ENCODE measurements at regions of chr2 and their contacts with region 1.

Region 1: DNA sequence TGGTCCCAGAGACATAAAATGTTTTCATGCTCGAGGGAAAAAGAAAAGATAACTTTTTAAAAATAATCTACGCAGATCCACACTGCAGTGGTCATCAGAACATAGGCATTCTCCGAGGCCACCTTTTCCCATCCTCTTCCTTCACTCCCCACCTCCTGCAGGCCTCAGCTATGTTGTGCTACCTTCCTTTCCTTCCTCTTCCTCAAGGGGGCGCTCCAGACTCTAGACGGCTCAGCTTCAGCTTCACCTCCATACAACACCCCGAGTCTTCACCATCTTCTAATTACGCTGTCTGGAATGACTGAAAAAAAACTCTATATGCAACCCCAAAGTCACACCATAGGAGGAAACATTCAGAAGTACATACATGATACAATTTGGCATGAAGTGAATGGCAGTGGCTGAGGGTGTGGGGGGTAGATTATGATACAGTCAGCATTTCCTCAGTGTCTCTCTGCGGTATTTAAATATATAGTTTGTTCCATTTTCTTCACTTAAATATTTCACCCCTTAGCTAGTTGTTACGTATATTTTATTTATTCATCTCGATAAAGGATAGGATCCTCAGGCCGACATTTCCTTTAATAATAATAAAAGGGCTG is 583.6 kb downstream of the IRS1 start:
- DNase-seq: peak; percentile 42 to 58 (median 50)
- H3K4me3 ChIP-seq: no peak overlapping the region
- H3K4me3 Mint-ChIP-seq: no peak overlapping the region
- H3K27ac ChIP-seq: no peak overlapping the region
- H3K27ac Mint-ChIP-seq: no peak overlapping the region
- H3K4me1 ChIP-seq: no peaks in the 10 kb centered on the region
- H3K4me1 Mint-ChIP-seq: peaks cover 0 to 3% (median 2%) of the 10 kb centered on the region in 4 donors
- H3K27me3 ChIP-seq: no peaks in the 10 kb centered on the region
- H3K27me3 Mint-ChIP-seq: peaks cover 4 to 7% of the 10 kb centered on the region in 2 donors

Region 2: DNA sequence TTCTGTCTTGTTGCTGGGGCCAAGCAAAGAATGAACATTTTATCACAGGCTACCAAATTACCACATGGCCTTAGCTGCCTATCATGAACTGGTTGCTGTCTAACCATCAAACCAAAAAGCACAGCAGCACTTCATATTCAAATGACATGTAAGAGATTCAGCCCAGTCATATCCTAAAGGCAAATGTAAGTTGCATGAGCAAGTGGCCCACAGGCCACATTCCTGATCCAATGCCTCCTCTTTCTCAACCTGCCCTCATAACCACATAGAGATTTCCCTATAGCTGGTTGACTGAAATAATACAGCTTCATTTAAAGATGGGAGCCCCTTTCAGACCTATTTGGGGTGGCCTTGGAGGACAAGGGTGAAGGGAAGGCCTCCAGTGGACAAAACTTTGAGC is 11.4 kb after region 1 on chr2:
- CTCF ChIA-PET with region 1: interaction called, 13 read pairs
- POLR2A ChIA-PET with region 1: no interaction called
- intact Hi-C with region 1: no loop called
- DNase-seq: no peak
- H3K4me3 ChIP-seq: no peak overlapping the region
- H3K4me3 Mint-ChIP-seq: no peak overlapping the region
- H3K27ac ChIP-seq: no peak overlapping the region
- H3K27ac Mint-ChIP-seq: no peak overlapping the region
- H3K4me1 ChIP-seq: no peaks in the 10 kb centered on the region
- H3K4me1 Mint-ChIP-seq: no peaks in the 10 kb centered on the region
- H3K27me3 ChIP-seq: no peaks in the 10 kb centered on the region
- H3K27me3 Mint-ChIP-seq: peaks cover 0 to 6% of the 10 kb centered on the region in 2 donors

Region 3: GRCh38 chr2:226984750-226985582 is 769.0 kb after region 1 on chr2:
- CTCF ChIA-PET with region 1: interaction called, 5 read pairs
- POLR2A ChIA-PET with region 1: no interaction called
- intact Hi-C with region 1: loop called (anchors 2 kb)
- DNase-seq: peak in 4 of 5 donors; percentile 3 to 23 (median 14)
- H3K4me3 ChIP-seq: no peak overlapping the region
- H3K4me3 Mint-ChIP-seq: no peak overlapping the region
- H3K27ac ChIP-seq: no peak overlapping the region
- H3K27ac Mint-ChIP-seq: peak overlapping the region in 2 of 7 donors; percentile 48 to 64
- H3K4me1 ChIP-seq: peaks cover 7% of the 10 kb centered on the region
- H3K4me1 Mint-ChIP-seq: peaks cover 14 to 23% (median 18%) of the 10 kb centered on the region in 4 donors
- H3K27me3 ChIP-seq: no peaks in the 10 kb centered on the region
- H3K27me3 Mint-ChIP-seq: no peaks in the 10 kb centered on the region